ENCODE measurements at regions of chr9 and their contacts with region 1.

Region 1: GRCh38 chr9:96566498-96567207 is 53.0 kb downstream of the CDC14B start:
- DNase-seq: no peak
- H3K4me3 ChIP-seq: peak overlapping the region; percentile 67
- CTCF ChIP-seq: peak; percentile 65

Region 2: GRCh38 chr9:96289392-96289791 is 277.3 kb before region 1 on chr9:
- CTCF ChIA-PET with region 1: no interaction called
- POLR2A ChIA-PET with region 1: no interaction called
- DNase-seq: no peak
- H3K4me3 ChIP-seq: no peak overlapping the region
- CTCF ChIP-seq: no peak

Region 3: DNA sequence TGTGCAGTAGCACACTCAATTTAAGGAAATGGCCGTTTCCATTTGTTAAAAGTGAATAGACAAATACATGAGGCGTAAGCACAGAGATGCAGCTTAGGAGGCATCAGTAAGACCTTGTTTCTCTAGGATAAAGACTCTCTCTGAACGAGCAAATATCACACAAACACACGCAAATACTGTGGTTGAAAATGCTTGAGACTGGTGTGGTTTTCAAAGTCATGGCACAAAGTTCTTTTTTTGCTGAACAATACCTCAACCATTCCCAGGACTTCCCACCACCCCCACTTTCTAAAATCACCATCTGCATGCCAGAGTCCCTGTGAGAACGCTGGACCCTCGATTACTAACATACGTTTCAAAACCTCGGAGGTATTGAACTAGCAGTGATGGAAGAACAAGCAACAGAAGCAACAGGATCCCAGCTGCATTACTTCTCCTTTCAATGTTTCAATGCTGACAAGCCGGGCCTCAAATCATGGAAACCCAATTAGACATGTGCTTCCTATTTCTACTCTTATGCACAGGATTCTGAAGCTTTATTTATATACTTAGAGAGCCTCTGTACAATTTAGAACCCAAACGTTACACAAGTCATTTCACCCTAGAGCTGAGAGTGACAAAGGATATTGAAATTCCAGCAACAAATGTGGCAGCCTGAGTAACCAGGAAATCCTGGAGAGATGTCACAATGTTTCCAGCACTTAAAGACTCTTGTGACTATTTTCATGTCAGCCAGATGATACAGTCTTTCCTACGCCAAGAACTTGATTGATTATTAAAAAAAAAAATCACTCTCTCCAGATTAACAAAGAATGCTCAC is 10.9 kb before region 1 on chr9:
- CTCF ChIA-PET with region 1: interaction called, 34 read pairs
- POLR2A ChIA-PET with region 1: interaction called, 8 read pairs
- DNase-seq: no peak
- H3K4me3 ChIP-seq: no peak overlapping the region
- CTCF ChIP-seq: no peak

Region 4: GRCh38 chr9:96581786-96582185 is 15.1 kb after region 1 on chr9:
- CTCF ChIA-PET with region 1: interaction called, 12 read pairs
- POLR2A ChIA-PET with region 1: interaction called, 6 read pairs
- DNase-seq: no peak
- H3K4me3 ChIP-seq: no peak overlapping the region
- CTCF ChIP-seq: no peak

Region 5: DNA sequence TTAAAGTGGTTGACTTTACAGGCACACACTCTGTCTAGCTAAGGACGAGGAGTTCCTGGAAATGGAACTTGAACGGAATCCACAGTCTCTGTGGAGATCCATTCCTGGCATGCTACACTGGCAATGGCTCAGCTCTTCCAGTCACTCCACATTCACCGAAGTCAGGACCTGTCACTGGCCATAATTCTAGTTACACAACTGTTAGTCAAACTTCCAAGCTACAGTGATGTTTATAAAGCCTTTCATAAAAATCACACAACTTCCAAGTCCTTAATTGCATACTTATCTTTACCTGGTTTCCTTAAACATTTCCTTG is 37.3 kb after region 1 on chr9:
- CTCF ChIA-PET with region 1: no interaction called
- POLR2A ChIA-PET with region 1: no interaction called
- DNase-seq: no peak
- H3K4me3 ChIP-seq: no peak overlapping the region
- CTCF ChIP-seq: no peak

Region 6: GRCh38 chr9:96769989-96770388 is 203.3 kb after region 1 on chr9:
- CTCF ChIA-PET with region 1: no interaction called
- POLR2A ChIA-PET with region 1: no interaction called
- DNase-seq: no peak
- H3K4me3 ChIP-seq: no peak overlapping the region
- CTCF ChIP-seq: no peak

Measured in AG04449 (cell line).